Calu3 (cell line): ENCODE measurements at regions of chr1 and their contacts with region 1.

Region 1: GRCh38 chr1:167066333-167067122 is 23.6 kb downstream of the GPA33 start:
- DNase-seq: peak; percentile 92
- H3K4me3 Mint-ChIP-seq: peak overlapping the region; percentile 59
- H3K27ac Mint-ChIP-seq: no peak overlapping the region
- H3K4me1 Mint-ChIP-seq: peaks cover 7% of the 10 kb centered on the region
- H3K27me3 Mint-ChIP-seq: no peaks in the 10 kb centered on the region
- CTCF ChIP-seq: peak; percentile 96

Region 2: GRCh38 chr1:167105271-167106118 is 39.0 kb after region 1 on chr1:
- CTCF ChIA-PET with region 1: no interaction called
- intact Hi-C with region 1: loop called (anchors 1 kb)
- DNase-seq: no peak
- H3K4me3 Mint-ChIP-seq: peak overlapping the region; percentile 17
- H3K27ac Mint-ChIP-seq: peak overlapping the region; percentile 4
- H3K4me1 Mint-ChIP-seq: peaks cover 31% of the 10 kb centered on the region
- H3K27me3 Mint-ChIP-seq: no peaks in the 10 kb centered on the region
- CTCF ChIP-seq: no peak

Region 3: GRCh38 chr1:167121375-167122120 is 55.0 kb after region 1 on chr1:
- CTCF ChIA-PET with region 1: interaction called, 3 read pairs
- intact Hi-C with region 1: loop called (anchors 1 kb)
- DNase-seq: peak; percentile 84
- H3K4me3 Mint-ChIP-seq: peak overlapping the region; percentile 78
- H3K27ac Mint-ChIP-seq: peak overlapping the region; percentile 17
- H3K4me1 Mint-ChIP-seq: peaks cover 24% of the 10 kb centered on the region
- H3K27me3 Mint-ChIP-seq: peaks cover 15% of the 10 kb centered on the region
- CTCF ChIP-seq: no peak

Region 4: DNA sequence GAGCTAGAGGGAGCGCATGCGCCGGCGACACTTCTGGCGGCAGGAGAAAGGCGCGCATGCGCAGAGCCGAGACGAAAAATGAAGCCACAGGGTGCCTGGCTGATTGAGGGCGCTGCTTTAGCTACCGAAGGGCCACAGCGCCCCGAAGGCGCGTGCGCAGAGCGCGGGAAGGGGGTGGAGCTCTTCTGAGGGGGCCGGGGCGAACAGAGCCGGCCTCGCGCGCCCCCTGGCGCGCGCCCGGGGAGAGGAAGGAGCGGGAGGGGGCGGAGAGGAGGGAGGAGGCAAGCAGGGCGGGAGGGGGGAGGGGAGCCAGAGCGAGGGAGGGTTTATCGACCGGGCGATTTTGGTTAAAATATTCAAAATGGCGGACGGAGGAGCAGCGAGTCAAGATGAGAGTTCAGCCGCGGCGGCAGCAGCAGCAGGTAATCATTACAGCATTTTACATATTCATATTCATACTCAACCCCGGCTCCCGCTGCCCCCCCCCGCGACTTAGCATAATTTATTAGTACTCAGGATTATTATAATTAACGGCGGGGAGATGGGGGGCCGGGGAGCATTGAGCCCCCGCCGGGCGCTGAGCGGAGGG is 154.1 kb after region 1 on chr1 and contains the start of gene POU2F1:
- CTCF ChIA-PET with region 1: interaction called, 9 read pairs
- intact Hi-C with region 1: loop called (anchors 2 kb)
- DNase-seq: peak; percentile 98
- H3K4me3 Mint-ChIP-seq: peak within 1 kb of the TSS; percentile 79
- H3K27ac Mint-ChIP-seq: peak within 1 kb of the TSS; percentile 87
- H3K4me1 Mint-ChIP-seq: peaks cover 25% of the 10 kb centered on the region
- H3K27me3 Mint-ChIP-seq: no peaks in the 10 kb centered on the region
- CTCF ChIP-seq: peak; percentile 63
- total RNA-seq, gene POU2F1: 25.3 and 25.4 TPM in 2 replicates

Region 5: GRCh38 chr1:167263819-167264464 is 197.4 kb after region 1 on chr1:
- CTCF ChIA-PET with region 1: no interaction called
- intact Hi-C with region 1: no loop called
- DNase-seq: no peak
- H3K4me3 Mint-ChIP-seq: no peak overlapping the region
- H3K27ac Mint-ChIP-seq: no peak overlapping the region
- H3K4me1 Mint-ChIP-seq: peaks cover 6% of the 10 kb centered on the region
- H3K27me3 Mint-ChIP-seq: no peaks in the 10 kb centered on the region
- CTCF ChIP-seq: no peak

Region 6: GRCh38 chr1:167342846-167343245 is 276.3 kb after region 1 on chr1:
- CTCF ChIA-PET with region 1: no interaction called
- intact Hi-C with region 1: loop called (anchors 10 kb)
- DNase-seq: no peak
- H3K4me3 Mint-ChIP-seq: no peak overlapping the region
- H3K27ac Mint-ChIP-seq: no peak overlapping the region
- H3K4me1 Mint-ChIP-seq: no peaks in the 10 kb centered on the region
- H3K27me3 Mint-ChIP-seq: no peaks in the 10 kb centered on the region
- CTCF ChIP-seq: no peak

Region 7: GRCh38 chr1:167442124-167442848 is 375.8 kb after region 1 on chr1:
- CTCF ChIA-PET with region 1: no interaction called
- intact Hi-C with region 1: loop called (anchors 1 kb)
- DNase-seq: peak; percentile 97
- H3K4me3 Mint-ChIP-seq: no peak overlapping the region
- H3K27ac Mint-ChIP-seq: peak overlapping the region; percentile 18
- H3K4me1 Mint-ChIP-seq: peaks cover 19% of the 10 kb centered on the region
- H3K27me3 Mint-ChIP-seq: no peaks in the 10 kb centered on the region
- CTCF ChIP-seq: peak; percentile 85

Region 8: DNA sequence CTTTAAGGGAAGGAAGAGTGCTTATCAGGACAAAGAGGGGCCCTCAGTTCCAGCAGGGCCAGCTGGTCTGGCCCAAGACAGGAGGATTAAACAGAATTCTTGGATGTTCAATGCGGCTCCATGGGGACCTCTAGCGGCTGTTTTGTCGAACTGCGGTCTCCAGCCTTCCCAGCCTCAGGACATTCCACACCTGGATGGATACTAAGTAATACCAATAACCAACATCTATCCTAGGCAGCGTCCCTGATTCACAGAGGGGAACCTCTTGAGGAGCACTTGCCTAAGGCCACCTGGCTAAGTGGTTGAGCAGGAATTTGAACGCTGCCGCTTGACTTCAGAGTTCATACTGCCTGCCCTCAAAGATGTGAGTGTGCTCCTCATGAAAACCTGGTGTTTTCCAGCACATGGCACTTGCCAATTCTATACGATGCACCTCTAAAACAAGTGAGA is 467.3 kb after region 1 on chr1:
- CTCF ChIA-PET with region 1: no interaction called
- intact Hi-C with region 1: loop called (anchors 5 kb)
- DNase-seq: peak; percentile 80
- H3K4me3 Mint-ChIP-seq: no peak overlapping the region
- H3K27ac Mint-ChIP-seq: no peak overlapping the region
- H3K4me1 Mint-ChIP-seq: peaks cover 7% of the 10 kb centered on the region
- H3K27me3 Mint-ChIP-seq: no peaks in the 10 kb centered on the region
- CTCF ChIP-seq: peak; percentile 90